ENCODE measurements at regions of chr3 and their contacts with region 1.

Region 1: DNA sequence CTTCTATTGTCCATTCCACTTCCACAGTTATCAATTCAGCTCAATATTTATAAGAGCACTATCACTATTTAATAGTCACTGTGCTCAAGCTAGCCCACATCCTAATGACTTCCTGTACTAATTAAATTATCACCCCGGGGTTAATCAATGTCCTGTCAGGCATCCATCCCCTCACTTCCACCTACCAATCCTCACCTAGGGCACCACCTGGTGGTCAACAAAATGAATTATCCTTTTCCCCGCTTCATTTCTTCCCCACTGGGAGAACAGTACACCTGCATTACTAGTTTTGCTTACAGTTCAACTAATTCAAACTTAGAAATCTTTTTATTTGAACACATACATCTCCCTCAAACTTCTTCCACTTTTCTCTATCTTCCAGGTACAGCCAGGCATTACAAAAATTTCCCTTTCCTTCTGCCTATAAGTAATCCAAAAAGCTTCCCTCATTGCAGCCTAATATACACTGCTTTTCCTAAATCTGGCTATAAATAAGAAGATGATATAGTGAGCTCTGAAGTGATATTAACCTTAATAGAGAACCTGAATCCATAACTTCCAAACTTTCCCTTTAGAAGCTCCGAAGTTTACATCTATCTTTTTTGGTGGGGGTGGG is 68.5 kb downstream of the TMCC1 start:
- DNase-seq: peak; percentile 62
- ATAC-seq: peak; percentile 41
- H3K4me3 ChIP-seq: no peak overlapping the region
- H3K27ac ChIP-seq: no peak overlapping the region
- H3K4me1 ChIP-seq: peaks cover 4% of the 10 kb centered on the region
- H3K27me3 ChIP-seq: no peaks in the 10 kb centered on the region
- CTCF ChIP-seq: peak; percentile 81

Region 2: GRCh38 chr3:129490242-129491045 is 334.6 kb before region 1 on chr3:
- CTCF ChIA-PET with region 1: interaction called, 5 read pairs
- POLR2A ChIA-PET with region 1: no interaction called
- intact Hi-C with region 1: loop called (anchors 1 kb)
- DNase-seq: peak; percentile 75
- ATAC-seq: peak; percentile 90
- H3K4me3 ChIP-seq: no peak overlapping the region
- H3K27ac ChIP-seq: peak overlapping the region; percentile 59
- H3K4me1 ChIP-seq: peaks cover 34% of the 10 kb centered on the region
- H3K27me3 ChIP-seq: no peaks in the 10 kb centered on the region
- CTCF ChIP-seq: peak; percentile 84

Region 3: DNA sequence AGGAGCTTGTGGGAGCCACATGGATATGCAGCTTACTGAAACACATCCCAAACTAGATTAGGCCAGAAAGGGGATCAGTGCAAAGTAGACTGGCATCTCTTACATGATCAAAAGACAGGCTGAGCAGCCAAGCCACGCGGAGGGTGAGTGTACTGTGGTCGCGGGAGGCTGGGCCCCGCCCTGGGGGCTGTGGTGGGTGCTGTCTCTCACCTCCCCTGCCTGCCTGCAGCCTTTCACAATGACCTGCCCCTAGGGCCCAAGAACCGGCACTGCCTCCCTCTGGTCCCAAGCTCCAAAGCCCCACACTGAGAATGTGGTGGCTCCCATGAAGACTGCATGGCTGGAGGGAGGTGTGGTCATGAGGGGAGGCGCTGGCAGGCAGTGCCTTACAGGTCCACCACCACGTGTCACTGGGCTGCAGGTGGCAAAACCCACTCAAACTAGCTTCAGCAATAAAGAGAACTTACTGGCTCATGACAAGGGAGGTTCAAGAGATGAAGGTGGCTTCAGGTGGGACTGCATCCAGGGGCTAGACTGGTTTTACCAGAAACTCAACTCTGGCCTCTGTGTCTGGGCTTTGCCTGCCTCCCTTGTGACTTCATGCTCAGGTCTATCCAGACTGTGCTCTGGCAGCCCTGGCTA is 191.2 kb before region 1 on chr3:
- CTCF ChIA-PET with region 1: no interaction called
- POLR2A ChIA-PET with region 1: no interaction called
- intact Hi-C with region 1: no loop called
- DNase-seq: peak; percentile 16
- ATAC-seq: no peak
- H3K4me3 ChIP-seq: no peak overlapping the region
- H3K27ac ChIP-seq: no peak overlapping the region
- H3K4me1 ChIP-seq: no peaks in the 10 kb centered on the region
- H3K27me3 ChIP-seq: no peaks in the 10 kb centered on the region
- CTCF ChIP-seq: no peak

Region 4: GRCh38 chr3:129650256-129650872 is 174.7 kb before region 1 on chr3:
- CTCF ChIA-PET with region 1: no interaction called
- POLR2A ChIA-PET with region 1: no interaction called
- intact Hi-C with region 1: loop called (anchors 1 kb)
- DNase-seq: peak; percentile 77
- ATAC-seq: peak; percentile 32
- H3K4me3 ChIP-seq: no peak overlapping the region
- H3K27ac ChIP-seq: peak overlapping the region; percentile 79; the same call in 1 of the 2 replicates
- H3K4me1 ChIP-seq: peaks cover 34% of the 10 kb centered on the region
- H3K27me3 ChIP-seq: no peaks in the 10 kb centered on the region
- CTCF ChIP-seq: peak; percentile 75

Region 5: DNA sequence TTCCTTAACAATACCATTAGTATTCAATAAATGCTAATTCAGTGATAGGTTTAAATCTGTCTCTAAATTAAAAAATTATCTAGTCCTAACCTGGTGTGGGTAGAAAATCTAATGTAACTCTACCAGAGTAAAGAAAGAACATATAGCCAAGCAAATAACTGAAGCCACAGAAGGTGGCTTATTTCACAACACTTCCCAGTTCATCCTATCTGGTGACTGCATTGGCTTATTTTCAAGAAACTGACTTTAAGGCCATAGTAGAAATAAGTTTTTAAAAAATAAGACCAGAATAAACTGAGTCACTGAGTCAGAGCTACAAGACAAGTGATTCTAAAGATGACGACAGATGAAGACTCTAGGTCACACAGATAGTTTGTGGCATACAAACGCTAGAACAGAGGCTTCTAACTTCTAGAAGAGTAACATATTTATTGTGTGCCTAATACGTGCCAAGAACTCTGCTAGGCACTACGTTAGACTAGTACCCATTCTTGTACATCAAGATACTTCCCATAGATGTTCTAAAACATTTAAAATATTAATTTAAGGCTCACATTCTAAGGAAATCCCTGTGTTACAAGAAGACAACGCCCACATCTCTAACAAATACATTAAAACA is 42.6 kb after region 1 on chr3:
- CTCF ChIA-PET with region 1: no interaction called
- POLR2A ChIA-PET with region 1: no interaction called
- intact Hi-C with region 1: loop called (anchors 5 kb)
- DNase-seq: no peak
- ATAC-seq: no peak
- H3K4me3 ChIP-seq: no peak overlapping the region
- H3K27ac ChIP-seq: no peak overlapping the region
- H3K4me1 ChIP-seq: peaks cover 13% of the 10 kb centered on the region
- H3K27me3 ChIP-seq: no peaks in the 10 kb centered on the region
- CTCF ChIP-seq: no peak

Region 6: GRCh38 chr3:129934234-129935123 is 109.4 kb after region 1 on chr3:
- CTCF ChIA-PET with region 1: no interaction called
- POLR2A ChIA-PET with region 1: no interaction called
- intact Hi-C with region 1: loop called (anchors 1 kb)
- DNase-seq: peak; percentile 42
- ATAC-seq: peak; percentile 74
- H3K4me3 ChIP-seq: peak overlapping the region; percentile 64
- H3K27ac ChIP-seq: no peak overlapping the region
- H3K4me1 ChIP-seq: no peaks in the 10 kb centered on the region
- H3K27me3 ChIP-seq: no peaks in the 10 kb centered on the region
- CTCF ChIP-seq: peak; percentile 89

Region 7: GRCh38 chr3:129961134-129961541 is 136.1 kb after region 1 on chr3:
- CTCF ChIA-PET with region 1: no interaction called
- POLR2A ChIA-PET with region 1: no interaction called
- intact Hi-C with region 1: no loop called
- DNase-seq: no peak
- ATAC-seq: no peak
- H3K4me3 ChIP-seq: no peak overlapping the region
- H3K27ac ChIP-seq: no peak overlapping the region
- H3K4me1 ChIP-seq: no peaks in the 10 kb centered on the region
- H3K27me3 ChIP-seq: no peaks in the 10 kb centered on the region
- CTCF ChIP-seq: no peak